Calu3 (cell line): ENCODE measurements at regions of chr7 and their contacts with region 1.

Region 1: DNA sequence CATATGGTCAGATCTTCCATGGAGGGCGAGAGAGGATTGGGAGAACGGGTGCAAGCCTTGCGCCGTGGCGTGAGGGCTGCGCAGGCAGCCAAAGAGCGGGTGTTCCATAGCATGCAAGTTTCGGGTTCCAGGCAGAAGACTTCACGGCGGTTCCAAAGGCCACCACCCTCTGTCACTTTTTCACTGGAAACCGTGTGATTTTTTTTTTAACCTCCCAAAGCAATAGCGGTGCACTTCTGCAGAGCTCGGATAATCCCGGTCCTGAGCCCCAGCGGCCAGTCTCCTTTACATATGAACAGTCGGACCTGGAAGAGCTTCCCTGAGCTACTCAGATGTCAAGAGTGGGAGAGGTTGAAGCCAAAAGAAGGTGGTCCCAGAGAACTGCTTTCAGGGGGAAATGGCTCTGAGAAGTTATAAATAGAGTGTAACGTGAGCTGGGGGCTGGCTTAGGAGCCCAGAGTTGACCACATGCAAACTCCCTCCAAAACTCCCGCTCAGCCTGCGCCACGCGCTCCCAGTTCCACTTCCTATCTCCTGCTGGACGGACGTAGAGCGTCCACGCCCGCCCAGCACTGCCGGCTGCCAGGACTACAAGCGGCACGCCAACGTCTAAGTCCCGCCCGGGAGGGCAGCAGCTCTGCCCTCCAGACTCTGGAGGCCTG is at the start of gene MEOX2:
- DNase-seq: peak; percentile 81
- H3K4me3 Mint-ChIP-seq: peak within 1 kb of the TSS; percentile 95
- H3K27ac Mint-ChIP-seq: peak within 1 kb of the TSS; percentile 63
- H3K4me1 Mint-ChIP-seq: peaks cover 47% of the 10 kb centered on the region
- H3K27me3 Mint-ChIP-seq: peaks cover 48% of the 10 kb centered on the region
- CTCF ChIP-seq: no peak
- total RNA-seq, gene MEOX2: 8.7 and 12.6 TPM in 2 replicates

Region 2: DNA sequence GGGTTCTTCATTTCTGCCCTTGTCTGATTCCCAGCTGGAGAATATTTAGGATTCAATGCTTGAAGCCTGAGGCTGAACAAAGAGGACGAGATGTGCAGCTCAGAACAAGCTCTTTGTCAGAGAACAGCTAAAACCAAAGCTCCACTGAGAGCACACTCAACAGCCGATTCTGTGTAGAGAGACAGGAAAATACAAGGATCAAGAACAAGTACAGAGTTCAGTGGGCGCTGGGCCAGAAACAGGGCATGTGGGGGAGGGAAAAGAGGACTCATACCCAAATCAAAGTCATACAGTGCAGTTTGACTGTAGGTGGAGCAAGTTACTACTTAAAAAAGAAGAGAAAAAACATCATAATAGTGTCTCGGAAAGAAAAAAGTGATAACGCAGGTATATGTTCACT is 124.6 kb before region 1 on chr7 and contains the start of gene AGMO:
- CTCF ChIA-PET with region 1: interaction called, 32 read pairs
- intact Hi-C with region 1: loop called (anchors 2 kb)
- DNase-seq: peak; percentile 87
- H3K4me3 Mint-ChIP-seq: peak within 1 kb of the TSS; percentile 69
- H3K27ac Mint-ChIP-seq: peak within 1 kb of the TSS; percentile 55
- H3K4me1 Mint-ChIP-seq: peaks cover 38% of the 10 kb centered on the region
- H3K27me3 Mint-ChIP-seq: no peaks in the 10 kb centered on the region
- CTCF ChIP-seq: no peak
- total RNA-seq, gene AGMO: 13.2 and 13.9 TPM in 2 replicates

Region 3: DNA sequence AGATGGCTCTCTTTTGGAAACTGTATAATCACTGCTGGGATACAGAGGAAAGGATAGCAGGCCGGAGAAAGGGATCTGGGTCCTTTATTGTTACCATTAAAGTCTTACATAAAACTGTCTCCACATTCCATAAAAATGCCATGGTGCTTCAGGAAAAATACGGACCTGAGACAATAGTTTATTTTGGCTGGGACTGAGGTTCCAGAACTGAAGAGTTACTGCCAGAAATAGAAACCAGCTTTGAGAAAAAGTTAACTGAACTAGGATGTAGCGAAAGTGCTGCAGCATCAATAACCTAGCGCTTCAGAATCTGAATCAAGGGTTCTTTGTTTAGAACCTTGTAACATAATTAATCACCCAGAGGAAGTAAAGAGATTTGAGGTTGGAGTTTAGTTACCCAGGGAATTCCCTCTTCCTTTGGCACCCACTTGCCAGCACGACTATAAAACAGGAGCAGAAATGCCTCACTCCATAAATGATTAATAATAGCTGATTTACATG is 37.9 kb before region 1 on chr7:
- CTCF ChIA-PET with region 1: interaction called, 3 read pairs
- intact Hi-C with region 1: loop called (anchors 1 kb)
- DNase-seq: peak; percentile 56
- H3K4me3 Mint-ChIP-seq: peak overlapping the region; percentile 27
- H3K27ac Mint-ChIP-seq: peak overlapping the region; percentile 39
- H3K4me1 Mint-ChIP-seq: peaks cover 40% of the 10 kb centered on the region
- H3K27me3 Mint-ChIP-seq: no peaks in the 10 kb centered on the region
- CTCF ChIP-seq: no peak

Region 4: DNA sequence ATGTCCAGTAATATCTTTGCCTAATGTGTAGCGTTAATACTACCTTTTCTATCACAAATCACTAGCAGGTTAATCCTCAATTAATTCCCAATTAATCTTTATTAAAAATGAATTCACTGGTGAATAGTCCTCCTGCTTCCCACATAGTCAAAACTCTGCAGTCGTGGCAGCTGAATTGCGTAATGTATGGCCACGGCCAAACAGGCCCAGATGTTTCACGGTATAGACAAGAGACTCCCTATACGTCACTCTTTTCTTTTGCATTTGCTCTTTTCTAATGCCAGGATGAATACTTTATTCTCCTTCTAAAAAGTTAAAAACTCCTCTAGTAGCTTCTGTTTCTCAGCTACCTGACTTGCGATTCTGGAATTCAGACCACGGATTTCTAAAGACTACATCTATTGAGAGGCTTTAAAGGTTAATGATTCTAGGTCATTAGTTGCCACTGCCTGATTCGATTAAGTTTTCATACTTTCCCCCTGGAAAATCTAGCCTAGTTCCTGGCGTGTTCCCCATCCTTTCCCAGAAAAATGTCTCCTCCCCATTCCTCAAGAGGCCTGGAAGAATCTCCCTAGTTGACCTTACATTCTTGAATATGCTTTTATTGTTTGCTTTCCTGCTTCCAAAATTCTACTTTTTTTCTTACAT is 16.9 kb before region 1 on chr7:
- CTCF ChIA-PET with region 1: interaction called, 7 read pairs
- intact Hi-C with region 1: loop called (anchors 2 kb)
- DNase-seq: no peak
- H3K4me3 Mint-ChIP-seq: peak overlapping the region; percentile 31
- H3K27ac Mint-ChIP-seq: peak overlapping the region; percentile 37
- H3K4me1 Mint-ChIP-seq: peaks cover 57% of the 10 kb centered on the region
- H3K27me3 Mint-ChIP-seq: no peaks in the 10 kb centered on the region
- CTCF ChIP-seq: no peak

Region 5: GRCh38 chr7:16062269-16062668 is 375.8 kb after region 1 on chr7:
- CTCF ChIA-PET with region 1: no interaction called
- intact Hi-C with region 1: loop called (anchors 10 kb)
- DNase-seq: no peak
- H3K4me3 Mint-ChIP-seq: no peak overlapping the region
- H3K27ac Mint-ChIP-seq: no peak overlapping the region
- H3K4me1 Mint-ChIP-seq: peaks cover 23% of the 10 kb centered on the region
- H3K27me3 Mint-ChIP-seq: no peaks in the 10 kb centered on the region
- CTCF ChIP-seq: no peak